Calu3 (cell line): ENCODE measurements at regions of chr16 and their contacts with region 1.

Region 1: DNA sequence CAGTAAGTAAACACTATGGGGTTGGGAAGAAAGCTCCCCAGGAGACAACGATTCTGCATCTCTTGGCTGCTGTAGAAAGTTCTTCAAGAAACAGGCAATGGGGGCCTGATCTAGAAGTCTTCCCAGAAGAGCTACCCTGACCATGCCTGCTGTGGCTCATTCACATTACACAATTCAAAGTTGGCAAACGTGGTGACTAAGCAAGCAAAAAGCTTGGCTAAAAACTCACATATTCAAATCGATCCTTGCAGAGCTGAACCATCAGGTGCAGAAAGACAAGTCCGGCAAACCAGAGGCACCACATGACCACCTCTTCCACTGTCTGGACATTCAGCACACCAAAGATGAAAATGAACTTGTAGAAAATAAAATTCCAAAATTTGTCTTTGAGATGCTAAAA is 16.1 kb downstream of the AMFR start:
- DNase-seq: peak; percentile 66
- H3K4me3 Mint-ChIP-seq: peak overlapping the region; percentile 65
- H3K27ac Mint-ChIP-seq: peak overlapping the region; percentile 96
- H3K4me1 Mint-ChIP-seq: peaks cover 18% of the 10 kb centered on the region
- H3K27me3 Mint-ChIP-seq: no peaks in the 10 kb centered on the region
- CTCF ChIP-seq: no peak

Region 2: GRCh38 chr16:56348158-56349085 is 60.8 kb before region 1 on chr16:
- CTCF ChIA-PET with region 1: no interaction called
- intact Hi-C with region 1: no loop called
- DNase-seq: no peak
- H3K4me3 Mint-ChIP-seq: no peak overlapping the region
- H3K27ac Mint-ChIP-seq: no peak overlapping the region
- H3K4me1 Mint-ChIP-seq: no peaks in the 10 kb centered on the region
- H3K27me3 Mint-ChIP-seq: peaks cover 48% of the 10 kb centered on the region
- CTCF ChIP-seq: no peak

Region 3: DNA sequence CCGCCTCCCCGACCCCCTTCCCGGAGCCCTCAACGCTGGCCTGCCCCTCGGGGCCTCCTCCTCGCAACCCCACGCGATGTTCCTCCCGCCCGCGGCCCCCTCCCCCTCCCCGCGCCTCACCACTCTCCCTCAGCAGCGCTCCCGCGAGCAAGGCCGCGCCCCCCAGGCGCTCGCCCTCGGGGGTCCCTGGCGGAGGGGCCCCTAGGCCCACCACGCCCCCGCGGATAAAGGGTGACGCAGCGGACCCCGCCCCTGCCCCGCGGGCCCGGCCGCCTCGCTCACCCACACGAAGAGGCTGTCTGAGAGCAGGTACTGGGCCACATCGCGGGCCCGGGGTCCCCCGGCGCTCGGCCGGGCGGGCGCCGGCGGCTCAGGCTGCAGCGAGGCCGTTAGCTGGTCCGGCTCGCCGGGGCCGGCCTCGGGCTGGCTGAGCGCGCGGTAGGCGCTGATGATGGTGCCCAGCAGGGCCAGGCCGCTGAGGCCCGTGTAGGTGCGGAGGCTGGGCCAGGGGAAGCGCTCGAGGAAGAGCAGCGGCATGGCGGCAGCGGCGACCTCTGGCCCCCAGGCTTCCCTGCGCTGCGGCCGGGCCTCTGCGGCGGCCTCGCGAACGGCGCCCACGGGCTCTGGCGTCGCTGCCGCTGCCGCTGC is 15.7 kb after region 1 on chr16:
- CTCF ChIA-PET with region 1: interaction called, 10 read pairs
- intact Hi-C with region 1: no loop called
- DNase-seq: peak; percentile 40
- H3K4me3 Mint-ChIP-seq: peak overlapping the region; percentile 94
- H3K27ac Mint-ChIP-seq: peak overlapping the region; percentile 87
- H3K4me1 Mint-ChIP-seq: peaks cover 44% of the 10 kb centered on the region
- H3K27me3 Mint-ChIP-seq: no peaks in the 10 kb centered on the region
- CTCF ChIP-seq: no peak

Region 4: DNA sequence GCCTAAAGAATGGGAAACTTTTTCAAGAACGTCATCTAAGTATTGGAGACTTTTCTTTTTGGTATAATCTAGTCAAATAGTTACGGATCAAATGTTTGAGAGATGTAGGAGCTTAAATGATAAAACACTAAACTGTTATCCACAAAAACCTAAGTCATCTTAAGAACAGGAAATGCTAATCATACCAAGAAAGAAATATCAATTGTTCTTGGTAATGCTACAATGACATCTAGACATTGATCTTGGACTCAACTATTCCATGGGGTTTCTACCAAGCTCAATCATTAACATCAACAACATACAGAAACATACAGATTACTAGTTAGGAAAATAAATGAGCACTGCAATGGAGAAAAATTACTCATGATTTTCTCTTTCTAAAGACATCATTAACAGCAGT is 38.1 kb after region 1 on chr16:
- CTCF ChIA-PET with region 1: interaction called, 9 read pairs
- intact Hi-C with region 1: loop called (anchors 5 kb)
- DNase-seq: no peak
- H3K4me3 Mint-ChIP-seq: peak overlapping the region; percentile 77
- H3K27ac Mint-ChIP-seq: peak overlapping the region; percentile 16
- H3K4me1 Mint-ChIP-seq: peaks cover 29% of the 10 kb centered on the region
- H3K27me3 Mint-ChIP-seq: no peaks in the 10 kb centered on the region
- CTCF ChIP-seq: no peak

Region 5: DNA sequence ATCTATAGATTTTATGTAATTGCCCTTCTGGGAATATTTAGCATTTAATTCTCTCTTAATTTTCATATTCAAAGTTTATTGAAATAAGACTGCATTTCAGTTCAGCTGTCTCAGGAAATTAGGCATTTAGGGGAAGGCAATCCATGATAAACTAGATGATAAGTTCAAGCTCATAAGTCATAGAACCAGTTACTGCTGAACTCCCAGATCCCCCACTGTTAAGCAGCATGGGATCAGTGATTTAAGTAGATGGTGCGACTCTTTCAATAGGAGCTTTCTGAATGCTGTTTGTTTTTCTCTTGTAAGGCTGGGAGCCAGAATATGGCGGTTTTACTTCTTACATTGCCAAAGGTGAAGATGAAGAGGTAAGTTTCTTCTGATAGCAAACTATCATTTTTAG is 66.0 kb after region 1 on chr16:
- CTCF ChIA-PET with region 1: no interaction called
- intact Hi-C with region 1: no loop called
- DNase-seq: no peak
- H3K4me3 Mint-ChIP-seq: no peak overlapping the region
- H3K27ac Mint-ChIP-seq: no peak overlapping the region
- H3K4me1 Mint-ChIP-seq: no peaks in the 10 kb centered on the region
- H3K27me3 Mint-ChIP-seq: no peaks in the 10 kb centered on the region
- CTCF ChIP-seq: no peak